AG04450 (cell line): ENCODE measurements at regions of chr5 and their contacts with region 1.

Region 1: DNA sequence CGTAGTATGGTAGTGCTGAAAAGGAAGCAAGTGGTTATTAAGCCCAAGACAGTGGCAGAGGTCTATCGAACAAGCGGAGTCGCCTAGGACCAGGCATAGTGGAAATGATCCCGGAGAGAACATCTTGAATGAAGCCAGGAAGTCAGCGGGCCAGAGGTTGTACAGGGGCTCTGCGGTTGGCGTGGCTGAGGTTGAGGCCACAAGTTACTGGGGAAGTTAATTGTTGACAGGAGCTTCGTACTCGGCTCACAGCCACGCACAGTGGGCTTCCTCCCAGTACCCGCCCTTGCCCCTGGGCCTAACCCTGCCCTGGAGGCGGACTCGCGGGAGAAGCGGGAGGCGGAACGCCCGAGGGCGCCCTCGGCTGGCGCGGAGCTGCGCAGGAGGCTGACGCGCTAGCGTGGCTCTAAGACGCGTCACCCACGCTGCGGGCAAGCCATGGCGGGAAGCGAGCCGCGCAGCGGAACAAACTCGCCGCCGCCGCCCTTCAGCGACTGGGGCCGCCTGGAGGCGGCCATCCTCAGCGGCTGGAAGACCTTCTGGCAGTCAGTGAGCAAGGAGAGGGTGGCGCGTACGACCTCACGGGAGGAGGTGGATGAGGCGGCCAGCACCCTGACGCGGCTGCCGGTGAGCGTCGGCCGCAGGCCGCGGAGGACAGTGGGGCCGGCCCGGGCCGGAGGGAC is at the start of gene FBXO4:
- DNase-seq: peak; percentile 44
- H3K4me3 ChIP-seq: peak within 1 kb of the TSS; percentile 68
- H3K27ac ChIP-seq: peak within 1 kb of the TSS; percentile 62
- H3K27me3 ChIP-seq: no peaks in the 10 kb centered on the region
- CTCF ChIP-seq: peak; percentile 66
- polyA plus RNA-seq, gene FBXO4: 6.6 and 10.9 TPM in 2 replicates

Region 2: DNA sequence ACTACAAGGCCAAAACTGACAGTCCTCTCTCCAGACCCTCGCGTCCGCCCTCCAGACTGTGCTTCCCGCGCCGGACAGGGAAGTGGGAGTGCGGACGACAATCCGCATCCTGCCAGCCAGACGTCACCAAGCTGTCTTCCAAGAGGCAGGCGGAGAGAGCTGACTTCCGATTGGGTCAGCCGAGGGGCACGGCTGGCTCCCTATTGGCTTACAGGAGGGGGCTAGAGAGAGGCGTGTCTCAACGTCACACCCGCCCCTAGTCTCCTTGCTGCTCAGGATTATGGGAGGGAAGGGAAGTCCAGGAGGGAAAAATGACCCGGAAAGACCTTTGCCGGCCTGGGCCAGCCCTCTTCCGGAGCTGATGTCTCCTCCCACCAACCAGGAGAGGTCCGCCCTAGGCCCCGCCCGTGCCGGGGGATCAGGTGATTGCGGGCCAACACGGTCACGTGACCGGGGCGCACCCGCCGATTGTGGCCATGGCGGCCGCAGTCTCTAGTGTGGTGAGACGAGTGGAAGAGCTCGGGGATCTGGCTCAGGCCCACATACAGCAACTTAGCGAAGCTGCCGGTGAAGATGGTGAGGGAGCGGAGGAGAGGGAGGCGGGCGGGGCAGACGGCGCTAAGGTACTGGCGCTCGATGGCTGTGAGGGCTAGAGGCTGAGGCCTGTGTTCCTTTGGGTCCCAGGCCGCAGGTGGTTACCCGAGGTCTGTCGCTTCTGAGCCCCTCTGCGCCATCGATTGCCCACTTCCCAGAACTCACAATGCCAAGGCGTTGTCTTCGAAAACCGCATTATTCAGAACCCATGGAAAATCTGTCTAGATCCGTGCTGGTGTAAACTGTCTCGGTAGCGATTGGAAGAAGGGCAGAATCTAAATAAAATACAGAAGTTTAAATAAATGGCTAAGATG is 20.9 kb before region 1 on chr5 and contains the start of gene RIMOC1:
- CTCF ChIA-PET with region 1: interaction called, 3 read pairs
- POLR2A ChIA-PET with region 1: interaction called, 15 read pairs
- DNase-seq: peak; percentile 99
- H3K4me3 ChIP-seq: peak within 1 kb of the TSS; percentile 95
- H3K27ac ChIP-seq: peak within 1 kb of the TSS; percentile 84
- H3K27me3 ChIP-seq: no peaks in the 10 kb centered on the region
- CTCF ChIP-seq: no peak
- polyA plus RNA-seq, gene RIMOC1: 26.8 and 43.1 TPM in 2 replicates